Sciatic nerve (tissue), 2 donors: ENCODE measurements at regions of chr10 and their contacts with region 1.

Region 1: DNA sequence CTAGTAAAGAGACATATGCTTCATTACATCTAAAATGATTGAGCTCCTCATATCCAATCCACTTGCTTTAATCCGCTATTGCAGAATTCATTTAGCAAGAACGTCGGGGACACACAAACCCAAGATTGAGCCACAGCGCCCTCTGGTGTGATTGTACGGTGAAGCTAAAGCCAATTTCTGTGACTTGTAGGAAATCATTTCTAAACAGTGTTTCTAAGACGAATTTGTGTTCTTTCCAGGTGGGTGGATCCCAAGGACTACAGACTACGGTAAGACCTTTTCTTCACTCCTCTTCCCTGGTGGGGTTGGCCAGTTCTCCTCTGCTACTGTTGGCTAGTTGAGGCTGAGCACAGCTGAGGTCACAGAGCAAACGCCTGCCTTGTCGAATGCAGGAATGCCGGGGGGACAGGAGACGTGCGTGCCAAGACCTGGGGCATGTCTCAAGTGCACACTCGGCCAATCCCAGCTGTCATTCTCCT is 5.2 kb downstream of the DMBT1 start:
- DNase-seq: peak; percentile 90
- ATAC-seq: peak; percentile 75

Region 2: DNA sequence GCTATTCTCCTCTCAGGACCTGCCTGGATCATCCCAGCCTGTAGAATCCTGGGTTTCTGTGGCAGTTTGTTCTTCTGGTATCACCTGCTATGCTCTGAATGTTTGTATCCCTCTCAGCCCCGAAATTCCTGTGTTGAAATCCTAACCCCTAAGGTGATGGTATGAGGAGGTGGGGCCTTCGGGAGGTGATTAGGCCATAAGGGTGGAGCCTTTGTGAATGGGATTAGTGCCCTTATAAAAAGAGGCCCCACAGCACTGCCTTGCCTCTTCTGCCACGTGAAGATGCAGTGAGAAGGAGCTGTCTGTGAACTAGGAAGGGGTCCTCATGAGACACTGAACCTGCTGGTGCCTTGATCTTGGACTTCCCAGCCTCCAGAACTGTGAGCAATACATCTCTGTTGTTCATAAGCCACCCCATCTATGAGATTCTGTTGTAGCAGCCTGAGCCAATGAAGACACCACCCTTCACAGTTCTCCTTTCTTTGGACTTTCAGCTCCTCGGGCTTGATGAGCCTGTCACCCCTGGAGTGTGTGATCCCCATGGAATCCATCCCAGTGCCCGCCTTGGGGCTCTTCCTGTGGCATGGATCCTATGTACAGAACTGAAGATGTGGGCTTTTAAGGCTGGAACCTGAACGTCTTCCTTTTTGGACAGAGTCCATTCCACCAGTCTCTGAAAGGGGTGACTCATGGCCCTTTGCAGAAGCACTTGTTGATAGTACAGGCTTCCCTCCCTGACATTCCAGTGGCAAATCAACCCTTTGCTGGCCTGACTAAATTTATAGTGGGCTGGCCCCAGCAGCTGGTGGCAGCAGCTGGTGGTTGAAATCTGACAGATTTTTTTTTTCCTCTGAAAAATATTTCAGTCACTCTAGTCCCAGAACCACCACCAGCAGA is 438.8 kb before region 1 on chr10:
- intact Hi-C with region 1: no loop called
- DNase-seq: no peak
- ATAC-seq: peak; percentile 67

Region 3: DNA sequence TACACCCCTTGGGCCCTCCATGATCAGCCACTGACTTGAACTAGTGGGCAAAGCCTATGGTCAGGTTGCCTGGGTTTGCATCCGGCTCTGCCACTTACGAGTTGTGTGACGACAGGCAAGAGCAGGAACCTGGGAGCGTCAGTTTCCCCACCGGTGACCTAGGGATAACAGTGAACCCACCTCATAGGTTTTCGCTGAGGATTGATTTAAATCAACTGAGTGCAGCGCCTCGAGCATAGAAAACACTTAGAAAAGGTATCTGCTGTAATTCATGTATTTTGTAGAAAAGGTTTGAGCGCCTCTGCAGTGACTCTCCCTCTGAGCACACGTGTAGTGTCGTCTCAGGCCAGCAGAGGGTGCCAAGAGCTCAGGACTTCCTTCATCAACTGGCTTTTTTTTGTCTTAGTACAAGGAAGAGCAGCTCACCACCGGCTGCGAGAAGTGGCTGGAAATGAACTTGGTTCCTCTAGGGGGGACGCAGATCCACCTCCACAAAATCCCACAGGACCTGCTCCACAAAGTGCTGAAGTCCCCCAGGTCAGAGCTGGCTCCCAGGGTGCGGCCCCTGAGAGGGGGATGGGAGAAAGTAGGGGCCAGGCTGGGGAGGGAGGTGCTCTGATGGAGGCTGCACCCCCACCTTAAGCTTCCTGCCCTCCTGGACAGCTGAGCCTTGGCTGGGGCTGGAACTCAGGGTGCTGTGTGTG is 267.0 kb before region 1 on chr10:
- intact Hi-C with region 1: loop called (anchors 10 kb)
- DNase-seq: peak; percentile 86
- ATAC-seq: peak; percentile 85

Region 4: GRCh38 chr10:122342293-122343134 is 223.3 kb before region 1 on chr10:
- intact Hi-C with region 1: loop called (anchors 5 kb)
- DNase-seq: no peak
- ATAC-seq: peak; percentile 79